Activated CD4-positive, alpha-beta memory T cell treated with anti-CD3 and anti-CD28 coated beads for 36 hours (primary cell): ENCODE measurements at regions of chr12 and their contacts with region 1.

Region 1: DNA sequence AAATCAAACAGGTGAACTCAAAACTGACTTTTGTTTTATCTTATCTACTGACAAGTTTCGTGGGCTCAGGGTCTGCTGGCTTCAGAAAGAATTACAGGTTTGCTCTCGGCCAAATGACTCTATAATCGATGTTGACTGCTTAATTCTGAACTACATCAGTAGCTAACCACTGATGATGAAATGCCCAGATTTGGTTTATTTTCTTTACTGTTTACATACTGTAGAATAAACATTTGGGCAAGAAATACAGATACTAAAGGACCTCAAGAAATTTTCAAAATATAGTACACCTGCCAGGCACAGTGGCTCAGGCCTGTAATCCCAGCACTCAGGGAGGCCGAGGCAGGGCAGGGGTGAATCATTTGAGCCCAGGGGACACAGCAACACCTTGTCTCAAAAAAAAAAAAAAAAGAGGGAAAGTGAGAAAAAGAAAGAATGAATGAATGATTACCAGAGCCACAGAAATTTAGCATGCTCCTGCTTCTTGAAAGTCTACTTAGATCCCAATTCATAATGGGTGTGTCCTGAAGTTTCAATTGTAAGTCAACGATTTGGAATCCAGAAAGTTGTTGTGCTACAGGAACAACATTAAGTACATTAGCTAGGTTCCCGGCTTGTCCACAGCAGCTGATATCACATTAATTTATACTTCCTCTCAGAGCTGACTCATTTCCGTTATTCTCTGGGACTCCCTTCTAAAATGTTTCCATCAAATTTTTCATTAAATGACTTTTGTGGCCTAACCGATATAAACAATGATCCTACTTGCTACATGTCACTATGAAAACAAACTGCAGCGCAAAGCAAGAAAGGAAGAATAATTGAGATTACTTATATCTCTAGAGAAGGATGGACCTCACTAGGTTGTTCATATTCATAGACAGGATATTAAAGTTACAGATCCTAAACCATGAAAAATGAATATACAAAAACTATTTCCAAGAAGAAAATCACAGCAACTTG is 134.3 kb downstream of the MED13L start:
- DNase-seq: no peak
- H3K4me3 Mint-ChIP-seq: no peak overlapping the region
- H3K27ac Mint-ChIP-seq: peak overlapping the region; percentile 42
- H3K4me1 Mint-ChIP-seq: peaks cover 51% of the 10 kb centered on the region
- H3K27me3 Mint-ChIP-seq: no peaks in the 10 kb centered on the region

Region 2: DNA sequence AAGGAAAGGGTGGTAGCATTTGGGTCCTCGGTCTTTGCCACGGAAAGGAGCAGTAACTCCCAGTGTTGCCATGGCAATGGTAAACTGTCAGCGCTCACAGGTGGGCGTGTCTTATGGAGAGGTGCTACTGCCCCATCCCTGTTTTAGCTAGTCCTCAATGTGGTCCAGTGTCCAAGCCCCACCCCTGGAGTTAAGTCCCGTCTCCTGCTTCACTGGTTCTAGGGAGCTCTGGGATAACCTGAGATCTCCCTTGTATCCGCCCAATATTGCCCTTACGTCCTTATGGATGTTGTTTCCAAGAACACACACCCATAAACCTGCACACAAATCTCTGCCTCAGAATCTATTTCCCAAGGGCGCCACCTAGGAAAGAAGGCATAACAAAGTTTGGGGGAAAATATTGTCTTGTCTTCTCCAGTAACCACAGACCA is 530.5 kb after region 1 on chr12:
- CTCF ChIA-PET with region 1: no interaction called
- POLR2A ChIA-PET with region 1: no interaction called
- intact Hi-C with region 1: loop called (anchors 10 kb)
- DNase-seq: peak; percentile 29
- H3K4me3 Mint-ChIP-seq: no peak overlapping the region
- H3K27ac Mint-ChIP-seq: no peak overlapping the region
- H3K4me1 Mint-ChIP-seq: peaks cover 29% of the 10 kb centered on the region
- H3K27me3 Mint-ChIP-seq: no peaks in the 10 kb centered on the region